Cardiac septum (tissue), 1 donor: ENCODE measurements at regions of chr5 and their contacts with region 1.

Region 1: GRCh38 chr5:38809388-38810359 is 36.1 kb upstream of the OSMR start:
- DNase-seq: peak; percentile 84

Region 2: DNA sequence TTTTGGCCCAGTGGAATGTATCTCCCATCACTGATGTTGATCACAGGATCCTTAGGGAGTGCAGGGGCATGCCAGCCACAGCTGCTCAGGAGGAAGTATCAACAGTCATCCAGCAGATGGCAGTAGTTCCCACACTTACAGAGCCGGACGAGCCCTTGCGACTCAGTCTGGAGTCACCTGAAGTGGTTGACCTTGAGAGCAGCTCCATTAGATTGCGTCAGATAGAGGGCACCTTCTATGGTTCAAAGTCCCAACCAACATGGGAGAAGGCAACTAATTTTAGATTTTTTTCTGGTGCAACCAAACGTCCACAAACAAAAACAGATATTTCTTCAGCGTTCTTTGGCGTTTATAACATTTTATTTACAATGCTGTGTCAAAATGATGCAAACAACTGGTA is 426.8 kb before region 1 on chr5:
- intact Hi-C with region 1: loop called (anchors 5 kb)
- DNase-seq: no peak

Region 3: DNA sequence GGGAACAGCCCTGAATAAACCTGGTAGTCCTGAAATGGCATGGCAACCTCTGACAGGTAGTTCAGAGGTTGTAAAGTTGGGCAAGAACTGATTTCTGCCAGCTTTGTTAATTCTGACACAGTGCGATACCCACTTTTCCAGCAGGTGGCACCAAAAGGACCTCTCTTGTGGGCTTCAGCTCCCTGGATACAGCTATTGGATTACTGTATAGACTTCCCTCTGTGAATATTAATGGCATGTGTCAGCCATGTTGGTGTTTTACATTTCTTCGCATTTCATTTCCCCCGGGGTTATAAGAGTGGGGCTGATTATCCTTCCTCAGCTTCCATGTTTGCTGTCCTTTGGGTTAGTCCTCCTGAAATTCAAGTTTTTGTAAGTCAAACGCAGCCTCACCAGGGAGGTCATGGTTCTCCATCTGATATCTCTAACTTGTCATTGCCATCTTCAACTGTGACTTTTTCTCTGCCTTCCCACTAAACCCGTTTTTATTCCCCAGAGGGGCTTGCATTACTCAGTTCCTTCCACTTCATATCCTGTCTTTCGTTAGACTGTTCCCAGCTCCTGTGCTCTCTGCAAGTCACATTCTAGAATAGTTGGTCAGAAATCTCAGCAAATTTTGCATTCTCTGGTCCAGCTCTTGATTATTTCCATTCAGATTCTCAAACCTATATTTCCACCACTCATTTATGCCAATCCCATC is 388.8 kb before region 1 on chr5:
- intact Hi-C with region 1: loop called (anchors 5 kb)
- DNase-seq: no peak

Region 4: GRCh38 chr5:38441453-38442246 is 368.0 kb before region 1 on chr5:
- intact Hi-C with region 1: loop called (anchors 2 kb)
- DNase-seq: peak; percentile 91

Region 5: DNA sequence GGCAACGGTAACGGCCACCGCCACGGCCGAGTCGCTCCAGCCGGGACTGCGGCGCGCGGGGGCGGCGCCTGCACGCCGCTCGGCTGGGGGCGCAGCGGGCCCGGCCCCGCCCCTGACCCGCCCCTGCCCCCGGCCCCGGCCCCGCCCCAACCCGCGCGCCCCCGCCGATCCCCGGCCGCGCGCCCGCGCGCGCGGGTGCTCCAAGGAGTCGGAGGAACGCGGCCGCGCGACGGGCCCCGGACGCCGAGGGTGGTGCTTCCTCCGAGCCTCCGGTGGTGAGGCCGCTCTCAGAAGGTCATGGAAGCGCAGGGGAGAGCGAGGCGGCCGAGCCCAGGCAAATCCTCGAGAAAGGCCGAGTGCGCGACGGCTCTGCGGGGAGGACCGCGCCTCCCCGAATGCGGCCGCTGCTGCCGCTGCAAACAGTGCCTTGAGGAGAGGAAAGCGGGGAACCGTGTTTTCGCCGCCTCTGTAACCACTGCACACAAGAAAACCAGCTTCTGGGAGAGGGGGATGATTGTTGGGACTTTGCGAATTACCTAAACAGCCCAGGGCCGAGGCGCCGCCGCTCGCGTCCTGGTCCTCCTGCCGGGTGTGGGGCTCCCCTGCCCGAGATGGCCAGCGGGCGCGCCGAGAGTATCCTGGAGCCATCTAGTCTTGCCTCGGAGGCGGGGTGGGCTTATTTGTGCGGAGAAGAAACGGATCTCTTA is 252.9 kb before region 1 on chr5 and contains the start of gene LIFR:
- intact Hi-C with region 1: loop called (anchors 5 kb)
- DNase-seq: peak; percentile 88
- total RNA-seq, gene LIFR: 30.9 TPM

Region 6: DNA sequence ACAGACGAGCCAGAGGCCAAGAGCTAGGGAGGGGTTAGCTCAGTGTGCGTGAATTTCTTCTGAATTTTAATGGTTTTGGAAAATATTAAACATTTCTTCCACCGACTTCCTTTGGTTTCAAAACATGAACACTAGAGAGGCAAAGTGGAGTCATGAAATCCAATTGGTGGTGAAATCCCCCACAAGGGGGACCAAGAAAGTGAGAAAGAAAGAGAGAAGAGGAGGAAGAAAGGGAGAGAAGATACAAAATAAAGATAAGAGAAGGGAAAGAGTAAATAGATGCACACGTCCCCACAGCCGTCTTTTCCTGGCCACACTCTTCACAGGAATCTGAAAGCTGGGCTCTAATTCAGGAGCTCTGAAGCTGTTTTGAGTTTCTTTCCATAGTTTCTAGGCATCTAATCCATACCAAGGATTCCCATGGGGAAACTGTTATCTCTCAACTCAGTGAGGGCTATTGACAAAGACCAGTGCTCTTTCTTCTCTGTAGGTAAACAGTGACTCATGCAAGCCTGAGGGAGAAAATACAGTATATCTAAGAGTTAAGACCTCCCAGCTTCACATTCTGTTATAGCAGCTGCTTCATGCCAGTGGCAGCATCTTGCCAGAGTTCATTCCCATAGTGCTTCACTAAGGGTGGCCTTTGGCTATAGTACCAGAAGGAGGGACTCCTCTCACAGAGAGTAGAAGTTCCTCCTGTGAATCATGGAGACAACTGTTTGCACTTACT is 137.4 kb before region 1 on chr5:
- intact Hi-C with region 1: loop called (anchors 5 kb)
- DNase-seq: no peak